ENCODE measurements at regions of chr19 and their contacts with region 1.

Region 1: DNA sequence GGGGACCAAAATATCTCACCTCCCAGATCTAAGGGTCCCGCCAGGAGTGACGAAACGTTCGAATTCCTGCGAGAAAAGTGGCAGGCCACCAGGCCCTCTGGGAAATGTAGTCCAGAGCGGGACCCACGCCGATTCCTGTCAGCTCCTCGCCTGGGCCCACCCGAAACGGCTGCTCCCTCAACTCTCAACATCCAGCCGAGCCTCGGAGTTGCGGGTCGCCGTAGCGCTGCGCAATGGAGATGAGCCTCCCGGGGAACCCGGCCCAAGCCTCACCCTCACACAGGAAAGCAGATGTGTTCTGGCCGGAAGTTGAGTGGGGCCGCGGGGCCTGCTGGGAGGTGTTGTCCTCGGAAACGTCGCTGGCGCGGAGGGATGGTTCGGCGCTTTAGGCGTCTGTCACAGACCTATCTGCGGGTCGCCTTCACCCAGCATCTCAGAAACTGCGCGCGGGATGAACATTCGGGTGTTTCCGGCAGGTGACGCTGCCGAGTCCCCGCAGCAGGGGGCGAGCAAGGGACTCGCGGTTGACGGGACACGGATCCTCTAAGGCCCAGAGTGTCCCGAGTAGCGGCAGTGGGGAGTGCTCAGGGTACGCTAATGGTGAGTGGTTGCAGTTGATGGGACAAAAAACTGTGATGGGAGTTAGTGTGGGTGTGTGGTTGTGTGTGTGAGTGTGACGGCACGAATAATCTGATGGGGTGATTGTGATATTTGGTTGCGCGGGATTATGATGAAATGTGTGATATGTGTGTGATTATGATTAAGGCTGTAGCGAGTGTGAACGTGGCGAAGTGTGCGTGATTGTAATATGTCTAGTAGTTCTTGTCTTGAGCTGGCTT is at the starts of genes ZNF568 and ZNF829:
- DNase-seq: peak; percentile 92 to 94
- H3K4me3 ChIP-seq: peak within 1 kb of the TSS; percentile 70 to 76
- H3K27ac ChIP-seq: peak within 1 kb of the TSS; percentile 91 to 93
- H3K4me1 ChIP-seq: peaks cover 0 to 17% (median 13%) of the 10 kb centered on the region in 4 donors
- H3K27me3 ChIP-seq: no peaks in the 10 kb centered on the region
- CTCF ChIP-seq: peak; percentile 60 to 64

Region 2: GRCh38 chr19:36665832-36666231 is 250.4 kb before region 1 on chr19:
- intact Hi-C with region 1: loop called (anchors 10 kb)
- DNase-seq: no peak
- H3K4me3 ChIP-seq: peak overlapping the region; percentile 84 to 93
- H3K27ac ChIP-seq: no peak overlapping the region
- H3K4me1 ChIP-seq: peaks cover 0 to 20% (median 8%) of the 10 kb centered on the region in 4 donors
- H3K27me3 ChIP-seq: no peaks in the 10 kb centered on the region
- CTCF ChIP-seq: no peak

Region 3: GRCh38 chr19:36833430-36833829 is 82.8 kb before region 1 on chr19:
- intact Hi-C with region 1: no loop called
- DNase-seq: no peak
- H3K4me3 ChIP-seq: no peak overlapping the region
- H3K27ac ChIP-seq: no peak overlapping the region
- H3K4me1 ChIP-seq: peaks cover 0 to 12% (median 4%) of the 10 kb centered on the region in 4 donors
- H3K27me3 ChIP-seq: no peaks in the 10 kb centered on the region
- CTCF ChIP-seq: no peak

Region 4: DNA sequence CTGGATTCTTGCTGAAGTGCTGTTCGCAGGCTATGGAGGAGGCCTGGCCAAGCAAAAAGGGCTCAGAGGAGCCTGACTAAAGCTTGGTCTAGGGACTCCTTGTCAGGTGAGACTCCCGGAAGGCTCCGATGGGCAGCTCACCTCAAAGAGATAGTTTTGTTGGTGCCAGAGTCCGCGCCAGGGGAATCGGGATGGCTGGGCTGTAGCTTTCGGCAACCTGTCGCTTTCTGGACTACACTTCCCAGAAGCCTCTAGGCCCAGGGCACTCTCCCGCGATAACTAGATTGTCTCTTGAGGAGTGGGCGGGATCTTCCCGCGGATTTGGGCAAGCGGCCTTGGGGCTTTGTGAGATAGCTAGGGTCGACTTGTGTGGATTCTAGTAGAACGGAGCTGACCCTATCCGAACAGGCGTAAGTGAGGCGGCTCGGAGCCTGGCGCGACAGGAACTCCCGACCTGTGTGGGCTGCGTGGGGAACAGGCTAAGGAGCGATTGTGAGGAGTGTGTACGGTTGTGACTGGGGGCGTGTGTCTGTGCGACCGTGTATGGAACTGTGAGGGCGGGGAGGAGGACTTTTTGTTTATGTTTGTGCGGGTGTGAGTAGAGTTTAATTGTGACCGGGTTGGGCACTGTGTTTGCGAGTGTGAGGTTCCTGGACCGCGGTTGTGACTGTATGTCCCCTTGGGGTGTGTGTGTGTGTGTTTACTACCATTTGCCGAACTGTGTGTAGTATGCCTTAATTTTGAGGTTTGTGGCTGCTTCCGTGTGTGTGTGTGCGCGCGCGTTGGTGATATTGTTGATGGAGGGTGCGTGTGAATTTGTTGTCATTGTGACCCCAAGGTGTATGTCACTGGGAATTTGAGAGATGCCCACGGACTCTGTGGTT is 65.4 kb before region 1 on chr19 and contains the start of gene ZNF345:
- intact Hi-C with region 1: loop called (anchors 10 kb)
- DNase-seq: peak; percentile 95
- H3K4me3 ChIP-seq: peak within 1 kb of the TSS; percentile 67 to 94
- H3K27ac ChIP-seq: peak within 1 kb of the TSS; percentile 86 to 90
- H3K4me1 ChIP-seq: peaks cover 0 to 29% (median 10%) of the 10 kb centered on the region in 4 donors
- H3K27me3 ChIP-seq: no peaks in the 10 kb centered on the region
- CTCF ChIP-seq: no peak

Measured in tibial artery (tissue), 4 donors.